ENCODE measurements at regions of chr12 and their contacts with region 1.

Region 1: GRCh38 chr12:3122835-3123678 is 45.9 kb downstream of the TSPAN9 start:
- DNase-seq: peak in 1 of 2 donors; percentile 88
- H3K4me3 ChIP-seq: no peak overlapping the region
- H3K27ac ChIP-seq: peak overlapping the region; percentile 63
- H3K4me1 ChIP-seq: peaks cover 3 to 29% of the 10 kb centered on the region in 2 donors
- H3K27me3 ChIP-seq: no peaks in the 10 kb centered on the region
- CTCF ChIP-seq: no peak

Region 2: DNA sequence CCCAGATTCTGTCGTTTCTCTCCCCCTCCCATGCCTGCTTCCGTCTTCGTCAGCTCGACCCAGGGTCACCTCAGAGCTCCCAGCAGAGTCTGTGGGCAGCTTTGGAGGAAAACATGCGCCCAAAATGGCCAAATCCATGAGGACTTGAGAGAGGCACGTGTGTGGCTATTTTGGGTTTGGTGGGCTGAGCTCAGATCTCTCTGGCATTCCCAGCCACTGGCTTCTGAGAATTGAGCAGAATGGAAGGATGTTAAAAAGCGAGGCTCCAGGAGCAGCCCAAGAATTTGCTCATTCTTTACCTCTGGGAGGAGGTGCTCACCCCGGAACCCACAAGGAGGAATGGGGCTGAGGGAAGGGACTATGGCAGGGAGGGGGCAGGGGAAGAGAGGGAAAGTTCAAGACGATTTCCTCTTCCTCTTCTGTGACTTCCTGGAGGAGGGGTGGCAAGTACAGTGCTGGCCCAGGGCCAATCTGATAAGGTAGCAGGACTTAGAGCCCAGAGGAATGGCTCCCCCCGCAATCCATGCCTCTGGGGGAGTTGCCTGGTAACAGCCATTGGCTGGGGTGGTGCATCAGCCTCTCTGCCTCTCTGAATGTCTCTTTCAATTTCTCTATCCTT is 25.8 kb before region 1 on chr12:
- intact Hi-C with region 1: loop called (anchors 2 kb)
- DNase-seq: peak; percentile 39 to 92
- H3K4me3 ChIP-seq: peak overlapping the region; percentile 35 to 56
- H3K27ac ChIP-seq: peak overlapping the region; percentile 85 to 93
- H3K4me1 ChIP-seq: peaks cover 0 to 25% of the 10 kb centered on the region in 2 donors
- H3K27me3 ChIP-seq: no peaks in the 10 kb centered on the region
- CTCF ChIP-seq: no peak

Region 3: DNA sequence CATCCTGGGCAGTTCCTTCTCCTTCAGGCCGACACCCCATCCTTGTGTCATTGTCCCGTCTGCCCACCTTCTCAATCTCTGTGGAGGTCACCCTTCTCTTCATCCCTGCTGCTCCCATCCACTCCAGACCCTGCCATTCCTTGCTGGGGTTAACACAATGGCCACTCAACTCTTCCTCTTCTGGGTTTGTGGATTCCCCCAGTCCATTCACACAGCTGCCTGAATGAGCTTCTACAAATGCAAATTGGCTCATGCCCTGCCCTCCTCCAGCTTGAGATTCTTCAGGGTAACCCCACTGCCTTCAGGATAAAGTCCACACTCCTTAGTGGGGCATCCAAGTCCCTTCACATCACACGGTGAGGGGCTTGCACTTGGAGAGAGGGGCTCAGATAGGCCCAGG is 350.8 kb after region 1 on chr12:
- intact Hi-C with region 1: no loop called
- DNase-seq: no peak
- H3K4me3 ChIP-seq: no peak overlapping the region
- H3K27ac ChIP-seq: no peak overlapping the region
- H3K4me1 ChIP-seq: no peaks in the 10 kb centered on the region
- H3K27me3 ChIP-seq: no peaks in the 10 kb centered on the region
- CTCF ChIP-seq: no peak

Measured in ascending aorta (tissue), 2 donors.